HepG2 (cell line): ENCODE measurements at regions of chr1 and their contacts with region 1.

Region 1: GRCh38 chr1:164617377-164618201 is 58.6 kb downstream of the PBX1 start:
- DNase-seq: peak; percentile 23
- ATAC-seq: 0 out of 3 replicates have a peak, but pooled peaks have one; percentile 41
- H3K4me3 ChIP-seq: no peak overlapping the region
- H3K27ac ChIP-seq: no peak overlapping the region
- H3K4me1 ChIP-seq: peaks cover 10% of the 10 kb centered on the region
- H3K27me3 ChIP-seq: no peaks in the 10 kb centered on the region
- CTCF ChIP-seq: peak; percentile 65
- EP300 ChIP-seq: no peak
- POLR2A ChIP-seq: no peak
- RAD21 ChIP-seq: peak; percentile 52

Region 2: DNA sequence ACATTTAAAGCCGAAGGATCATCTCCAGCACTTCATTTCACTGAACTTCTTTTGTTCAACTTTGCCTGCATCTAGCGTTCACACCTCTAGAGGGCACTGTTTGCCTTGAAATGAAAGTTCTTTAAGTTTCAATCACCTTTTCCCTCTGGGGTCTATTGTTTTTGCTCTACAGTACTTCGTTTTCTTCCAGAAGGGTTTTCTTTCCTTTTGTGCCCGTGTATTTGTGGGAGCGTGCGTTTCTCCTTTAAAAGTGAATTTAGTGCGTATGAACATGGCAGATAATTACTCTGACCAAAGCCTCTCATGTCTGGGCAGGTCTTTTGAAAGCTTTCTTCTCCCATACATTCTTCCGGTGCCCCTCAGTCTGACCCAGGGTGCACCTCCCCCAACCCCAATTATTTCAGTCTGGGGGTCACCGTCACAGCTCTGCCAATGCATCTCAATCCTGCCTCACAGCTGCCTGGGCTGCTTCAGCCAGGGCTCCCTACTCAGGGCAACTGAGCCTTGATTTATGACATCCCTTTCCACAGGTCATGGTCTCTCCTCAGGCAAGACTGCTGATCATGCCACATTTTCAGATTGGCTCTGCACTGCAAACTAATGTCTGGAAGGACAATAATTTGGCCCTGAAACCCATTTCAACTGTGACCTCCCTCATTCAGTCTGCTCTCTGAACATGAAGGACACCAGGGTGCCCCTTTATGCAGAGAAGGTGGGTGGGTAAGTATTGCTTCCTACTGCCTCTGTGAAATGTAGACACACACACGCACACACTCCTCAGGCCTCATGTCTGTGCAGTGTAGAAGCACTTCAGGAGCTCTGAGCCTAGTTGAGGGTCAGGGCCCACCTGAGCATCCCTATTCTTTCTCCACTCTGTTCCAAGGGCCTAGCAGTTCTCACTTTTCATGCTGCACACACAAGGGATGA is 1207.3 kb before region 1 on chr1:
- CTCF ChIA-PET with region 1: interaction called, 12 read pairs
- POLR2A ChIA-PET with region 1: no interaction called
- in situ Hi-C with region 1: loop called (anchors 10 kb)
- intact Hi-C with region 1: loop called (anchors 1 kb)
- DNase-seq: peak; percentile 51
- ATAC-seq: peak; percentile 59
- H3K4me3 ChIP-seq: no peak overlapping the region
- H3K27ac ChIP-seq: no peak overlapping the region
- H3K4me1 ChIP-seq: no peaks in the 10 kb centered on the region
- H3K27me3 ChIP-seq: peaks cover 0 to 7% of the 10 kb centered on the region in 2 experiments; a peak in 1 of 5 replicates
- CTCF ChIP-seq: peak; percentile 76
- EP300 ChIP-seq: no peak
- POLR2A ChIP-seq: no peak
- RAD21 ChIP-seq: peak; percentile 45; the same call in 1 of the 2 replicates

Region 3: DNA sequence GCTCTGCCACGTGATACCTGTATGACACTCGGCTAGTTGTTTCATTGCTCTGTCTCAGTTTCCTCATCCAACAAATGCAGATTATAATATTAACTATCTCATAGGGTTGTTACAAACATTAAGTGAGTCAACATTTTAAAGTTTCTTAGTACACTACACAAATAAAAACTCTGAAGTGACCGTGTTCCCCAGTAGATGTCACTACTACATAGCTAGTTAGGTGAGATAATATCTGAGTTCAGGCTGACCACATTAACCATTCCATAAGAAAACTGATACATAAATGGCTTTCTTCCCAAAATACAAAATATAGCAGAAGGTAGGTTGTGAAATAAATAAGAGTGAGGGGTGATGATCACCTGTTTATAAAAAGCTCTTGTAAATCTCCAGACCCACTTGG is 1081.8 kb before region 1 on chr1:
- CTCF ChIA-PET with region 1: interaction called, 6 read pairs
- POLR2A ChIA-PET with region 1: no interaction called
- in situ Hi-C with region 1: loop called (anchors 10 kb)
- intact Hi-C with region 1: no loop called
- DNase-seq: no peak
- ATAC-seq: no peak
- H3K4me3 ChIP-seq: no peak overlapping the region
- H3K27ac ChIP-seq: no peak overlapping the region
- H3K4me1 ChIP-seq: 0 out of 2 replicates have a peak, but pooled peaks cover 5% of the 10 kb centered on the region
- H3K27me3 ChIP-seq: no peaks in the 10 kb centered on the region
- CTCF ChIP-seq: 0 out of 2 replicates have a peak, but pooled peaks have one; percentile 17
- EP300 ChIP-seq: no peak
- POLR2A ChIP-seq: no peak
- RAD21 ChIP-seq: no peak

Region 4: DNA sequence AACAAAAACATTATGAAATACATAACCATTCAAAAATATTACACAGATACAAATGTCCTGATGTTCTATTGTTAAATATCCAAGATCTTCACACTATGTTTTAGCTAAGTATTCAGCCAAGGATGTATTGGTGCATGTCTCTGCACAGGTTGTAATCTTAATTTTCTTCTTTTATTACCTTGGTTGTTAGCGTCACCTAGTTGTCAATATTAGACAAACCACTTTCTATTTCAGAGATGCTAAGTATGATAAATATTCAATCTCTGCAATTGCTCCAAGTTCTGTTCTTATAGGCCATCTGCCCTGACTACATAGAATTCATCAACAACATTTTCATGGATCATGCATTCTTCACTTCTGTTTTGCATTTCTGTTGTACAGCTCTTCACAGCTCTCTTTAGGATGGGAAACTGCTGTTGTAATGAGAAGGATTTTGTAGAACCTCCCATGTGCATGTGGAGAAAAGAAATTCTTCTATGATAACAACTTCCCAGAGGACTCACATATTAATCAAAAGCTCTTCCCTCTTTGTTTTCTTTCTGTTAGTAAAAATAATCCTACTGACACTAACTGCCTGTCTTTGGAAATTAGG is 915.7 kb before region 1 on chr1:
- CTCF ChIA-PET with region 1: no interaction called
- POLR2A ChIA-PET with region 1: no interaction called
- in situ Hi-C with region 1: no loop called
- intact Hi-C with region 1: loop called (anchors 5 kb)
- DNase-seq: no peak
- ATAC-seq: no peak
- H3K4me3 ChIP-seq: no peak overlapping the region
- H3K27ac ChIP-seq: no peak overlapping the region
- H3K4me1 ChIP-seq: no peaks in the 10 kb centered on the region
- H3K27me3 ChIP-seq: no peaks in the 10 kb centered on the region
- CTCF ChIP-seq: no peak
- EP300 ChIP-seq: no peak
- POLR2A ChIP-seq: no peak
- RAD21 ChIP-seq: no peak